ENCODE measurements at regions of chr13 and their contacts with region 1.

Region 1: GRCh38 chr13:73835138-73835721 is 299.0 kb downstream of the KLF12 start:
- DNase-seq: no peak
- H3K4me3 ChIP-seq: no peak overlapping the region
- H3K27ac ChIP-seq: no peak overlapping the region
- H3K27me3 ChIP-seq: no peaks in the 10 kb centered on the region
- CTCF ChIP-seq: peak; percentile 63

Region 2: DNA sequence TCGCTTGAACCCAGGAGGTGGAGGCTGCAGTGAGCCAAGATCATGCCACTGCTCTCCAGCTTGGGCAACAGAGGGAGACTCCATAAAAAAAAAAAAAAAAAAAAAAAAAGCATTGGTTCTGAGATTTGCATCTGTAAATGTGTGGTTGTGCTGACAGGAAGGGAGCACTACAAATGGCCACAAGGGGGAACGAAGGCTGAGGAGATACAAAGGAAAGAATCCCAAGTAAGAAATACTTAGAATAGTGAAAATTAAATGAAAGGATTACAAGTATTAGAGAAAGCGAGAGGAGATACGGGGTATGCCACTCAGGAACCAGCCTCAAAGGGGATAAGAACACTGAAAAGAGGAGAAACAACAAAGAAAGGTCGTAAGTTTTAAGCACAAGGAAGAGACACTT is 14.1 kb after region 1 on chr13:
- CTCF ChIA-PET with region 1: interaction called, 24 read pairs
- POLR2A ChIA-PET with region 1: no interaction called
- DNase-seq: no peak
- H3K4me3 ChIP-seq: no peak overlapping the region
- H3K27ac ChIP-seq: no peak overlapping the region
- H3K27me3 ChIP-seq: no peaks in the 10 kb centered on the region
- CTCF ChIP-seq: peak; percentile 64

Region 3: GRCh38 chr13:73898276-73898675 is 63.0 kb after region 1 on chr13:
- CTCF ChIA-PET with region 1: no interaction called
- POLR2A ChIA-PET with region 1: no interaction called
- DNase-seq: no peak
- H3K4me3 ChIP-seq: no peak overlapping the region
- H3K27ac ChIP-seq: no peak overlapping the region
- H3K27me3 ChIP-seq: no peaks in the 10 kb centered on the region
- CTCF ChIP-seq: no peak

Region 4: GRCh38 chr13:74133657-74134201 is 298.5 kb after region 1 on chr13:
- CTCF ChIA-PET with region 1: interaction called, 10 read pairs
- POLR2A ChIA-PET with region 1: no interaction called
- DNase-seq: peak; percentile 92
- H3K4me3 ChIP-seq: peak overlapping the region; percentile 87
- H3K27ac ChIP-seq: peak overlapping the region; percentile 82
- H3K27me3 ChIP-seq: no peaks in the 10 kb centered on the region
- CTCF ChIP-seq: 0 out of 2 replicates have a peak, but pooled peaks have one; percentile 7

Region 5: DNA sequence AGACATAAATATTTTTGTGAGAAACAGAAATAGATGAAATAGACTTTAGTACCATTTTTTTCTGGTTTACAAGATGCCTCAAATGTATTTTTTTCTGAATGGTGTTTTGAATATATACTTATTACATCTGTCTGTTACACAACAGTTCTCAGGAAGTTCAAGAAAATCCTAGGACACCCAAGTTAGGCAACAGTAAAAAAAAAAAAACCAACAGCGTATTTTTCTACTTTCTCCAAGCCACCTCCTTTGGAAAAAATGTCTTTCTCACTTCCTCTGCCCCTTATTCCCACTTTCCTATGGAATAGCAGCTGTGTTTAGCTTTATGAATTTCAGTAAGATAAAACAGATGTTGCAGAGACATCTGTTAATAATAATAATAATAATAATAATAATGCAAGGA is 788.5 kb after region 1 on chr13:
- CTCF ChIA-PET with region 1: no interaction called
- POLR2A ChIA-PET with region 1: no interaction called
- DNase-seq: no peak
- H3K4me3 ChIP-seq: no peak overlapping the region
- H3K27ac ChIP-seq: no peak overlapping the region
- H3K27me3 ChIP-seq: no peaks in the 10 kb centered on the region
- CTCF ChIP-seq: no peak

Measured in AG04450 (cell line).